A549 (cell line): ENCODE measurements at regions of chr9 and their contacts with region 1.

Region 1: DNA sequence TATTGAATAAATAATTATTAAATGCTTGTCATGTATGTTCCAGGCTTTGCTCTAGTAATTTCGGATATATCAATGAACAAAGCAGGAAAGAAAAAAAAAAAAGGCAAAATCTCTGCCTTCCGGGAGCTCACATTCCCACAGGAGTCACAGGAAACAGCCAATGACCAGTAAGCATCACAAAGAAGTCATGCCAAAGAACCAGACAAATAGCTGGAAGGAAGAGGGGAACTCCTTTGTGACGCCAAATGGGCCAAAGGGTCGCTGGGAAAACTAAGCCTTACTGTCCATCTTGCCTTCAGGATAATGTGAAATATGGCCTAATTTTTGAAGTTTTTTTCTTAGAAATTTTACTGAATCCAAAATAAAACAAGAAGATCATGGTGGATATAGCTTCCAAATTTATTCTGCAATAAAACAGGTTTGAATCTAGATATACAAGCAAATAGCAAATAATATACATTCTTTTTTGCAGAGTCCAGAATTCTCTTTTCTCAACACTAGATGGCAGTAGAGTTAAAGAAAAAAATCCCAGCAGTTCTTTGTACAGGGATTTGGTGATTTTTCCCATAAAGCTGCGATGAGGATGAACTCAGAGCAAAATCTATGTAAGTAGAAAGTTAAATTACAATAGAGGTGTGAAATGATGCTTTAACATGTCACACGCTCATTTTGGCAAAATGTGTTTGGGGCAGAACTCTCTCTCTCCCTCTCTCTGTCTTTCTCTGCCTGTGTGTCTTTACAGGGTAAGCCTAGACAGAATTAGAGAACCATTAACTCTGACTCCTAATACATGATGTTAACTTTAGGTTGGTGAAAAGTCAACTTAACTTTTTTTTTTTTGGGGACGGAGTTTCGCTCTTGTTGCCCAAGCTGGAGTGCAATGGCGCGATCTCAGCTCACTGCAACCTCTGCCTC is 60.0 kb upstream of the TUT7 start:
- DNase-seq: peak in 1 of 2 experiments; percentile 43
- ATAC-seq: peak; percentile 76 to 83; a peak in 5 of 6 replicates
- H3K4me3 ChIP-seq: no peak overlapping the region
- H3K27ac ChIP-seq: no peak overlapping the region
- H3K4me1 ChIP-seq: no peaks in the 10 kb centered on the region
- CTCF ChIP-seq: peak; percentile 80
- EP300 ChIP-seq: no peak
- POLR2A ChIP-seq: no peak
- RAD21 ChIP-seq: peak; percentile 75 to 83

Region 2: DNA sequence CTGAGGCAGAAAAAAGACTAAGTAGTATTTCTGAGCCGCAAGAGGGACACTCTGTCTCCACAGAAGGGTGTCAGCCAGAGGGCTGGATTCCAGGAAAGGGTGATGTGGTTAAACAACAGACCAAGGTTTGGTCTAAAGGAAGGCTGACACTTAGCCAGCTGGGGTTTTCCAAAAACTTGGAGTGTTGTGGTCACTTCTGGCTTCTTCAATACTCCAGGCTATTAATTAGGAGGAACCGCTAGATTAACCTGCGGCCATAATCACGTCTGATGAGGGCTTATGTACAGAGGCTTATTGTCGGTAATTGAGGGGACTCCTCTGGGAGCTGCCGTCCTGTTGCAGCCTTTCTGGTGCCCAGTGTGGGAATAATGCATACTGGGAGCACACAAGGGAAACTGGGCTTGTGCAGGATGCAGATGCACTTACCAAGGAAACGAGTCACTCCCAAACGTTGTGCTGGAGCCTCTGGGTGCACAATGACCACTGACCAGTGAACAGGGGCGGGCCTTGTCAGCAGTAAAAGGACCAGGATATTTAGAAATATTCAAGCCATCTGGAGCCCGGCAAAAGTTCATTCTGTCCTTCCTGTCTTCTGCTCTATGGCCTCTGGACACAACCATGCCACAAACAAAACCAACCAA is 10.1 kb after region 1 on chr9:
- CTCF ChIA-PET with region 1: interaction called, 16 read pairs
- POLR2A ChIA-PET with region 1: no interaction called
- DNase-seq: no peak
- ATAC-seq: peak; percentile 38 to 43; a peak in 3 of 6 replicates
- H3K4me3 ChIP-seq: no peak overlapping the region
- H3K27ac ChIP-seq: no peak overlapping the region
- H3K4me1 ChIP-seq: no peaks in the 10 kb centered on the region
- CTCF ChIP-seq: no peak
- EP300 ChIP-seq: no peak
- POLR2A ChIP-seq: no peak
- RAD21 ChIP-seq: no peak

Region 3: DNA sequence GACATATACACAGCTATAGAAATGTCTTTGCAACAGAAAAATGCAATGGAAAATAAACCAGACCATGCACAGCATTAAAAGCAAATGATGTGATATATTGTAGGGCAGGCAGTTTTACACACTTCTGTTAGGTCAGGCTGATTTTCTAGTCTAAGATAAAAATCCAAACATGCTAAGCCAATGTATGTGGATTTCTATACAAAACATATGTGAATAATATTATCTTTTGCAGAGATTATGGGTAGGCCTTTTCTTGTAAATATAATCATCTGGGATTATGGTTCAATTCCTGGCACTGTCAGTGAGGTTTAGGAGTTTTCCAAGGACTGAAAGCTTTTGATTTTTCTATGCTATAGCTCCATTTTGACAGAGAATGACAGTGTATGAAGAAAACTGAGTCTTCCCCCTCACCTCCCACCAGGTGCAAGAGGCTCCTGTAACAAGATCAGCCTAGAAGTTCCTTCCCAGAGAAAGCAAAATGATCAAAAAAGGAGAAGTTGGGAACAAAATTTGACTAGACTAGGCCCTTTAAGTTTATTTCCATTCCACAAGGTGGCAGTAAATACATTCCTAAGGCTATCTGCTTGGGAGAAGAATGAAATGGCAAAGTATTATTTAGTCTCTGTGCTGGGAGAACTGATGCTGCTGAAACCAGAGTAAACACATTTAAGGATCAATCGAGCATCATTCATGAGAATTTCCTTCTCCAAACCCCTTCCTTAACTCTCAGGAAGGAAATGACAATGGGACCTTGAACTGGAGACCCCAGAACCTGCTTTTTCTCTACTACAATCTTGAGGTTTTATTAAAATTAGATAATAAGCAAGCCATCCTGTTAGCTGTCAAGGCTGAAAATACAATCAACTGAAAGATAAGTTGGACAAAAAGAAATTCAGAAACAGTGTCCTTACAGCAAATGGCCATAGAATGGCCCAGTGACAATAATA is 72.9 kb after region 1 on chr9:
- CTCF ChIA-PET with region 1: interaction called, 23 read pairs
- POLR2A ChIA-PET with region 1: no interaction called
- DNase-seq: peak; percentile 44 to 55
- ATAC-seq: peak; percentile 79 to 80
- H3K4me3 ChIP-seq: no peak overlapping the region
- H3K27ac ChIP-seq: no peak overlapping the region
- H3K4me1 ChIP-seq: no peaks in the 10 kb centered on the region
- CTCF ChIP-seq: peak; percentile 66
- EP300 ChIP-seq: no peak
- POLR2A ChIP-seq: no peak
- RAD21 ChIP-seq: peak; percentile 76 to 80

Region 4: GRCh38 chr9:87324613-87325194 is 910.5 kb after region 1 on chr9:
- CTCF ChIA-PET with region 1: interaction called, 47 read pairs
- POLR2A ChIA-PET with region 1: no interaction called
- DNase-seq: peak; percentile 31 to 49
- ATAC-seq: peak; percentile 73 to 89; a peak in 5 of 6 replicates
- H3K4me3 ChIP-seq: no peak overlapping the region
- H3K27ac ChIP-seq: no peak overlapping the region
- H3K4me1 ChIP-seq: peaks cover 7% of the 10 kb centered on the region; the same call in 1 of the 3 replicates
- CTCF ChIP-seq: peak; percentile 85
- EP300 ChIP-seq: no peak
- POLR2A ChIP-seq: no peak
- RAD21 ChIP-seq: peak; percentile 91 to 93